Naive thymus-derived CD4-positive, alpha-beta T cell (primary cell): ENCODE measurements at regions of chr7 and their contacts with region 1.

Region 1: DNA sequence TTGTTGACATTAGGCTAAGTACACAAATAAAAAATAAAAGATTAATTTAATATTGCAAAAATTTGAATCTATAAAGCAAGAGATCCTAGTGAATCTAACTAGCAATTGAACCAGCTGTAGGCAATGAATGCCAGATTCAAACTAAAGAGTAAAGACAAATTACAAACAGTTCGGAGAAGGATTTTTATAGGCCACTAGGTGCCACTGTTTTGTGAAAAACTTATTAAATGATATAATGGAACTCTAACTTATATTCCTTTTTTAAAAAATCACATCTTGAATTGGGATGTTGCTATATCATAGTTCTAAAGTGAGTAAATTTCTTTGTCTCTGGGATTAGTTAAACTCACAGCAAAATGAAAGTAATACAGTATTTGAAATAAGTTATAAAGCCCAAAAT is 39.1 kb upstream of the GNAI1 start:
- DNase-seq: peak in 3 of 9 donors; percentile 13 to 17 (median 17)
- ATAC-seq: no peak
- H3K4me3 ChIP-seq: no peak overlapping the region
- H3K4me3 Mint-ChIP-seq: no peak overlapping the region
- H3K27ac ChIP-seq: no peak overlapping the region
- H3K27ac Mint-ChIP-seq: no peak overlapping the region
- H3K4me1 ChIP-seq: no peaks in the 10 kb centered on the region
- H3K4me1 Mint-ChIP-seq: no peaks in the 10 kb centered on the region
- H3K27me3 ChIP-seq: no peaks in the 10 kb centered on the region
- H3K27me3 Mint-ChIP-seq: no peaks in the 10 kb centered on the region

Region 2: DNA sequence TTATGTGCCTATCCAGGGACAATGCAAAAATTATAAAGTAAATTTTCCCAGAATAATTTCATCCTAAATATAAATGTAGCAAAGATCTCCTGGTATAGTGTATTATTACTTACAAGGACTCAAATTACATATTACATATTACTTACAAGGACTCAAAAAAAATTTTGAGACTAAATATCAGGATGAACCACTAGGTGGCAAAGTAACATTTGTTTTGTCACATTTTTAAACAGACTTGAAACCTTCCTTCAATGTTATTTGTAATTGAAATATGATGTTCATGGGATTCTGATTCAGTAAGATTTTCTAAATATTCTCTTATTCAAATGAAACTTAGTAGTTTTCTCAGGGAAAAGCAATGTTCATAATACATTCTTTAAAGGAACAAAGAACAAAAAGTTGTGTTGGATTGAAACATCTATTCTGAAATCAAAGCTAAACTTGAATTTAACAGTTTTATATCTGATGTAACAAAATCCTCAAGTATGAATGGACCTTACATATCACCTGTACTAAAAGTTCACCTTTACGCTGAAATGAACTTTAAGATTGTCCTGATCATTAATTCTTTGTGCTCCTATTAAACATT is 35.2 kb before region 1 on chr7:
- CTCF ChIA-PET with region 1: no interaction called
- POLR2A ChIA-PET with region 1: no interaction called
- intact Hi-C with region 1: loop called in 1 of 2 experiments (anchors 1 kb)
- DNase-seq: peak in 5 of 9 donors; percentile 13 to 40 (median 22)
- ATAC-seq: no peak
- H3K4me3 ChIP-seq: no peak overlapping the region
- H3K4me3 Mint-ChIP-seq: no peak overlapping the region
- H3K27ac ChIP-seq: no peak overlapping the region
- H3K27ac Mint-ChIP-seq: no peak overlapping the region
- H3K4me1 ChIP-seq: no peaks in the 10 kb centered on the region
- H3K4me1 Mint-ChIP-seq: no peaks in the 10 kb centered on the region
- H3K27me3 ChIP-seq: no peaks in the 10 kb centered on the region
- H3K27me3 Mint-ChIP-seq: no peaks in the 10 kb centered on the region

Region 3: DNA sequence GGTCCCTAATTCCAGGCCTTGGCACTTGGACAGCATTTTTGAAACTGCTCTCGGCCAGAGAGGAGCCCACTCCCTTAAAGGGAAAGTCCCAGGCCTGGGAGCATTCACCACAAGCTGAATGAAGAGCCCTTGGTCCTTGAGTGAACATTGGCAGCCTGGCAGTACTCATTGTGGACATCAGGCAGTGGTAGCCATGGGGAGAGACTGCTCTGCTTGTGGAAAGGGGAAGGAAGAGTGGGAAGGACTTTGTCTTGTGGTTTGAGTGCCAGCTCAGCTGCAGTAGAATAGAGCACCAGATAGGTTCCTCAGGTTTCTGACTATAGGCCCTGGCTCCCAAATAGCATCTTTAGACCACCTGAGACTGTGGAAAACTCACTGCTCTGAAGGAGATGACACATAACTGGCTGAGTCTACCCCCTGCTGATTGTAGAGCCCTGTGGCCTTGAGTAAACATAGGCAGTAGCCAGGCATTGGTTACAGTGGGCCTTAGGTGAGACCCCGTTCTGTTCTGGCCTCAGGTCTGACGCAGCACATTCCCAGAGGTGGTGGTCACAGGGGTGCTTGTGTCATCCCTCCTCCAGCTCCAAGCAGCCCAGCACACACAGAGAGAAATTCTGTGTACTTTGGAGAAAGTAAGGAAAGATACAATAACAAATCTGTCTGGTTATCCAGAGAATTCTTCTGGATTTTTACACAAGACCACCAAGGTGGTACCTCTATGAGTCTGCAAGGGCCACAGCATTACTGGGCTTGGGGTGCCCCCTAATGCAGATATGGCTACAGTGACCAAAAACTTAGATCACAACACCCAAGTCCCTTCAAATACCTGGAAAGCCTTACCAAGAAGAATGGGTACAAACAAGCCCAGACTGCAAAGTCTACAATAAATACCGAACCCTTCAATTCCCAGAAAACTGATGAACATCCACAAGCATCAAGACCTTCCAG is 192.9 kb after region 1 on chr7:
- CTCF ChIA-PET with region 1: no interaction called
- POLR2A ChIA-PET with region 1: no interaction called
- intact Hi-C with region 1: loop called in 1 of 2 experiments (anchors 1 kb)
- DNase-seq: no peak
- ATAC-seq: no peak
- H3K4me3 ChIP-seq: no peak overlapping the region
- H3K4me3 Mint-ChIP-seq: no peak overlapping the region
- H3K27ac ChIP-seq: no peak overlapping the region
- H3K27ac Mint-ChIP-seq: no peak overlapping the region
- H3K4me1 ChIP-seq: no peaks in the 10 kb centered on the region
- H3K4me1 Mint-ChIP-seq: no peaks in the 10 kb centered on the region
- H3K27me3 ChIP-seq: no peaks in the 10 kb centered on the region
- H3K27me3 Mint-ChIP-seq: no peaks in the 10 kb centered on the region

Region 4: GRCh38 chr7:80392229-80393169 is 297.0 kb after region 1 on chr7:
- CTCF ChIA-PET with region 1: interaction called, 16 read pairs
- POLR2A ChIA-PET with region 1: no interaction called
- intact Hi-C with region 1: loop called (anchors 1 to 5 kb)
- DNase-seq: peak in 5 of 9 donors; percentile 13 to 38 (median 21)
- ATAC-seq: no peak
- H3K4me3 ChIP-seq: no peak overlapping the region
- H3K4me3 Mint-ChIP-seq: no peak overlapping the region
- H3K27ac ChIP-seq: no peak overlapping the region
- H3K27ac Mint-ChIP-seq: peak overlapping the region in 1 of 9 donors; percentile 23
- H3K4me1 ChIP-seq: no peaks in the 10 kb centered on the region
- H3K4me1 Mint-ChIP-seq: no peaks in the 10 kb centered on the region
- H3K27me3 ChIP-seq: no peaks in the 10 kb centered on the region
- H3K27me3 Mint-ChIP-seq: no peaks in the 10 kb centered on the region

Region 5: DNA sequence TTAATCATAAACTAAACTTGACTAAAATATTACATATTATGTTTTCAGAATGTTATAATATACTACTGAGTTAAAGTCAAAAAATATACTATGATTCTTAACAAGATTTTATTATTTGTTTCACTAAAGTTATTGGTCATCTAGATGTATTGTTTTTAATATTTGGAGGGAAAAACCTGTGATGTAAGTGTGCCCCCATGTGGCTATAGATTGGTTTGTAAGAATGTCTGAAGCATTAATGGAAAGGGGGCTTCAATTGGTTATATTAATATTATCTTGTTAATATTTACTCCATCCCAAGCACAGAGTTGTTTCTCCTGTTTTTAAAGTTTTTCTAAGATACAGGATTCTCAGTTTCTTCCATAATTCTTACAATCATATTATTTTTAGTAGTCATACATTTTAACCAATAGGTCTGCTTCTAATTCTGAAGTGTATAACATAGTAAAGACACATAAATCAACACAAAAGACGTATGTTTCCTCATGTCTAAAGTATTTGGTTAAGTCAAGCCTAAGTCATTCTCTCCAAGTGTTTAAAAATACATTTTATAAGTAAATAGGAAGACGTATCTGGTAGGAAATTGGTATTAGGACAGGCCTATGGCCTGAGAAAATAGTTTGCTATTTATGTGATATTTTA is 358.3 kb after region 1 on chr7:
- CTCF ChIA-PET with region 1: no interaction called
- POLR2A ChIA-PET with region 1: no interaction called
- intact Hi-C with region 1: loop called in 1 of 2 experiments (anchors 1 kb)
- DNase-seq: peak in 1 of 9 donors; percentile 4
- ATAC-seq: no peak
- H3K4me3 ChIP-seq: no peak overlapping the region
- H3K4me3 Mint-ChIP-seq: no peak overlapping the region
- H3K27ac ChIP-seq: no peak overlapping the region
- H3K27ac Mint-ChIP-seq: no peak overlapping the region
- H3K4me1 ChIP-seq: no peaks in the 10 kb centered on the region
- H3K4me1 Mint-ChIP-seq: no peaks in the 10 kb centered on the region
- H3K27me3 ChIP-seq: no peaks in the 10 kb centered on the region
- H3K27me3 Mint-ChIP-seq: no peaks in the 10 kb centered on the region

Region 6: GRCh38 chr7:80659120-80660055 is 563.8 kb after region 1 on chr7:
- CTCF ChIA-PET with region 1: no interaction called
- POLR2A ChIA-PET with region 1: no interaction called
- intact Hi-C with region 1: loop called in 1 of 2 experiments (anchors 1 kb)
- DNase-seq: peak in 4 of 9 donors; percentile 1 to 16 (median 14)
- ATAC-seq: peak; percentile 58
- H3K4me3 ChIP-seq: no peak overlapping the region
- H3K4me3 Mint-ChIP-seq: no peak overlapping the region
- H3K27ac ChIP-seq: no peak overlapping the region
- H3K27ac Mint-ChIP-seq: no peak overlapping the region
- H3K4me1 ChIP-seq: no peaks in the 10 kb centered on the region
- H3K4me1 Mint-ChIP-seq: no peaks in the 10 kb centered on the region
- H3K27me3 ChIP-seq: no peaks in the 10 kb centered on the region
- H3K27me3 Mint-ChIP-seq: peaks cover 0 to 6% (median 0%) of the 10 kb centered on the region in 5 donors